Activated T-helper 1 cell treated with anti-CD3 and anti-CD28 coated beads, Interleukin-12 subunit alpha, Interleukin-12 subunit beta, Interleukin-2, Interleukin-4 antibody, amounts not matched to agents 30 ng/mL and 10 ng/mL and 1 ng/mL, durations not matched to agents 14 hours and 24 hours and 36 hours (primary cell): ENCODE measurements at regions of chr16 and their contacts with region 1.

Region 1: GRCh38 chr16:87316923-87317749 is at the start of gene C16orf95:
- DNase-seq: peak; percentile 95
- H3K4me3 Mint-ChIP-seq: peak within 1 kb of the TSS; percentile 94
- H3K27ac Mint-ChIP-seq: peak within 1 kb of the TSS; percentile 99
- H3K4me1 Mint-ChIP-seq: peaks cover 17% of the 10 kb centered on the region
- H3K27me3 Mint-ChIP-seq: no peaks in the 10 kb centered on the region
- total RNA-seq, gene C16orf95: 9.9 and 10.9 TPM in 2 replicates

Region 2: GRCh38 chr16:86554917-86555703 is 762.0 kb before region 1 on chr16 and contains the start of gene MTHFSD:
- intact Hi-C with region 1: loop called (anchors 5 kb)
- DNase-seq: peak; percentile 94
- H3K4me3 Mint-ChIP-seq: peak within 1 kb of the TSS; percentile 86
- H3K27ac Mint-ChIP-seq: peak within 1 kb of the TSS; percentile 95
- H3K4me1 Mint-ChIP-seq: peaks cover 20% of the 10 kb centered on the region
- H3K27me3 Mint-ChIP-seq: peaks cover 5% of the 10 kb centered on the region
- total RNA-seq, gene MTHFSD: 30.6 and 31.8 TPM in 2 replicates

Region 3: DNA sequence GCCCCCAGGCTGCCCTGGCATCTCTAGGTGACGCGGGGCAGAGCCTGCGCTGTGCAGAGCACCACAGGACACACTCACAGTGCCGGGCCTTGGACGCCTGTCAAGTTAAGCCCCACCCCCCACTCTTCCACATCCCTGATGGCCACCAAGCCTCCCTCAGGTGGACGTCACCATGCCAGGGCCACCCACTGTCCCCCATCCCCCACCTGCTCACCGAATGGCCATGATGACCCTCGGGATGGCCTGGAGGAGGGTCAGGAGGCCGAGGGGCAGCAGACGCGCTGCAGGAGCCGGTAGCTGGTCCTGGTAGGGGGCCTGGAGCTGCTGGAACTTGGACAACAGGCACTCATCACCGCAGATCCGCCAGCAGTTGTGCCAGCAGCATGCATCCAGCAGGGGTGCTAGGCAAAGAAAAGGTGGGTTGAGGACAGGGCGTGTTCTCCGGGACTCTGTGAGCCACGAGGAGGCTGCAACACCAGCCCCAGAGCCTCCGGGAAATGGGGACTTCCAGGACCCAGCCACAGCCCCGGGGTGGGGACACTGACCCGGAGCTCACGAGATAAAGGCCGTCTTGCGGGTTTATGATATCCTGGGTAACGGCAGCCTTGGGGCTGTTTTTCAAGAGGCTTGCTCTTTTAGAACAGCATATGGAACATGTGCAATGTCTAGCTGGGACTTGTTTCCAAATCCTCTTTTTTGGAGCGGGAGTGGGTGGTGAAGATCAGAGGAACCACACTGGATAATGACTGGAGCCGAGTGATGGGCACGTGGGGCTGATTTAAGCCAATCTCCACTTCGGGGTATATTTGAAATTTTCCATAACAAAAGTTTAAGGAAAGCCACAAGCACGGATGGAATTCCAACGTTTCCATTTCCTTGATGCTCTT is 11.4 kb before region 1 on chr16:
- intact Hi-C with region 1: loop called (anchors 1 kb)
- DNase-seq: no peak
- H3K4me3 Mint-ChIP-seq: no peak overlapping the region
- H3K27ac Mint-ChIP-seq: no peak overlapping the region
- H3K4me1 Mint-ChIP-seq: peaks cover 34% of the 10 kb centered on the region
- H3K27me3 Mint-ChIP-seq: no peaks in the 10 kb centered on the region

Region 4: DNA sequence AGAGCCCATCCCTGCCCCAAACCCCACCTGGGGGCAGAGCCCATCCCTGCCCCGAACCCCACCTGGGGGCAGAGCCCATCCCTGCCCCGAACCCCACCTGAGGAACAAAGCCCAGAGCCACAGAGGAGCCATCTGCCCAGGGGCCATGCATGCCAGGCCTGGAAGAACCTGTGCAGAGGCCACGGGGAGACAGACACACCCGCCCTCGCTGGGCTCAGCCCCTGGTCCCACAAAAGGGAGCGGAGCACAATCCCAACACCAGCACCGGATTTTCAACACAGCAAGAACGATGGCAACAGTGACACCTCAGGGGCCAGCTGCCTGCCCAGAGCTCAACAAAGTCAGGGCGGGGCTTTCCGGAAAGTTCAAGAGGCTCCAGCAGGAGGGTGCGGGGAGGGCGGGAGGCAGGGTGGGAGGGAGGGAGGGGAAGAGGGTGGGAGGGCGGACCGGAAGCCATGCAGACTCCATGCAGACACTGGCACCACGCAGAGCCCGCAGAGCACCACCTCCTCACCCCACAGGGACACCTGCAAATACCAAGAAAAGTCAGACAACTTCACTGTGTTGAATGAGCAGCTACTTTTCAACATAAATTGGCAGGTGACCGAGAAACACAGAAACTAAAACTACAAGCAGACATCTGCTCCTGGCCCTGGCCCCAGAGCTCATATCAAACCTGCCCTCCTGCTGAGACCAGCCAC is 27.9 kb after region 1 on chr16:
- intact Hi-C with region 1: no loop called
- DNase-seq: peak; percentile 35
- H3K4me3 Mint-ChIP-seq: peak overlapping the region; percentile 67
- H3K27ac Mint-ChIP-seq: peak overlapping the region; percentile 92
- H3K4me1 Mint-ChIP-seq: peaks cover 11% of the 10 kb centered on the region
- H3K27me3 Mint-ChIP-seq: no peaks in the 10 kb centered on the region

Region 5: GRCh38 chr16:87375426-87376135 is 58.4 kb after region 1 on chr16:
- intact Hi-C with region 1: no loop called
- DNase-seq: no peak
- H3K4me3 Mint-ChIP-seq: no peak overlapping the region
- H3K27ac Mint-ChIP-seq: peak overlapping the region; percentile 29
- H3K4me1 Mint-ChIP-seq: peaks cover 14% of the 10 kb centered on the region
- H3K27me3 Mint-ChIP-seq: no peaks in the 10 kb centered on the region

Region 6: GRCh38 chr16:87387942-87388817 is 71.0 kb after region 1 on chr16:
- intact Hi-C with region 1: loop called (anchors 1 kb)
- DNase-seq: peak; percentile 88
- H3K4me3 Mint-ChIP-seq: peak overlapping the region; percentile 61
- H3K27ac Mint-ChIP-seq: peak overlapping the region; percentile 89
- H3K4me1 Mint-ChIP-seq: peaks cover 34% of the 10 kb centered on the region
- H3K27me3 Mint-ChIP-seq: peaks cover 2% of the 10 kb centered on the region

Region 7: DNA sequence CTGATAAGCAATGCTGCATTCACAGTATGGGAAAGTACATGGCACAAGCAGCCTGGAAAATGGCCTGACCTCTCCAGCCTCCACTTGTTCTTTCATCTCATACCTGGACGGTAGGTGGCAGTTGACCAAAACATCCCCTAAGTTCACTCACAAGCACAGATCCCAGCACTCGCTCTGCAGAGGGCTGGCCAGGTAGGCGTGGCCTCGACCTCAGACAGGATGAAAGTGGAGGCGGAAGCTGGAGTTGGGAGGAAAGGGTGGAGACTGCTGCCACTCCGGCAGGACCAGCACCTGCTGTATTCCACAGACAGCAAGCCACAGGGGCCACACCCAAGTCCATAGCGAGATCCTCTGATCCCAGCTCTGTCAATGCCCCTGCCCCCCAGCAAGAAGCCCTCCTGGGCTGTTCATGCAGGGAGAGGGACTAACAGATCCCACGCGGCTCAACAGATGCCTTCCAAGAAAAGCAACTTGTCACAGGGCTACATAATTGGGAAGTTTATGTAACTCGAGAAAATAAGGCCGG is 144.4 kb after region 1 on chr16:
- intact Hi-C with region 1: loop called (anchors 10 kb)
- DNase-seq: no peak
- H3K4me3 Mint-ChIP-seq: no peak overlapping the region
- H3K27ac Mint-ChIP-seq: no peak overlapping the region
- H3K4me1 Mint-ChIP-seq: peaks cover 38% of the 10 kb centered on the region
- H3K27me3 Mint-ChIP-seq: no peaks in the 10 kb centered on the region

Region 8: DNA sequence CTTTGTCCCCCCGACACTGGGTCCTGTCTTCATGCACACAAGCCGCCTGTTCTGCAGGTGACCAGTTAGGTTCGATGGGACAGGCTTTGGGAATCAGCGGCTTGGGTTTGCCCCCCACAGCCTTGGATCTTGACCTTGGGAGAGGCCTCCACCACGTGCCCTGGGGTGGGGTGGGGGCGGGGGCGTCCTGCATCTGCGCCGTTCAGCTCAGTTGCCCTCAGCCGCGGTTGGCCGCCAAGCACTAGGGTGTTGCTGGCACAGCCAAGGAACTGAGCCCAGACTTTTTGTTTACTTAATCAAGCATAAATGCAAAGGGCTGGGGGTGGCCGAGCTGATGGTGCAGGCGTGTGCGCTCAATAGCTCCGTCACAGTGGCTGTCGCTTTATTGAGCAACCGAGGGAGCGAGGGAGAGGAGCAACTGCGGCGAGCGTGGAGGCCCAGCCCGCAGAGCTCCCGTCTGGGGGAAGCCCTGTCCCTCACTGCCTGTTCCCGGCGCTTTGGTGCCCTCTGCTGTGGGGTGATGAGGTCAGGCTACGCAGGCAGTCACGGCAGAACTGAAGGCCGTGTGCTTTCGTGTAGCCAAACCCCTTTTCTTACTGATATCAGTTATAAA is 319.0 kb after region 1 on chr16:
- intact Hi-C with region 1: loop called (anchors 5 kb)
- DNase-seq: peak; percentile 52
- H3K4me3 Mint-ChIP-seq: peak overlapping the region; percentile 45
- H3K27ac Mint-ChIP-seq: no peak overlapping the region
- H3K4me1 Mint-ChIP-seq: no peaks in the 10 kb centered on the region
- H3K27me3 Mint-ChIP-seq: peaks cover 11% of the 10 kb centered on the region

Region 9: DNA sequence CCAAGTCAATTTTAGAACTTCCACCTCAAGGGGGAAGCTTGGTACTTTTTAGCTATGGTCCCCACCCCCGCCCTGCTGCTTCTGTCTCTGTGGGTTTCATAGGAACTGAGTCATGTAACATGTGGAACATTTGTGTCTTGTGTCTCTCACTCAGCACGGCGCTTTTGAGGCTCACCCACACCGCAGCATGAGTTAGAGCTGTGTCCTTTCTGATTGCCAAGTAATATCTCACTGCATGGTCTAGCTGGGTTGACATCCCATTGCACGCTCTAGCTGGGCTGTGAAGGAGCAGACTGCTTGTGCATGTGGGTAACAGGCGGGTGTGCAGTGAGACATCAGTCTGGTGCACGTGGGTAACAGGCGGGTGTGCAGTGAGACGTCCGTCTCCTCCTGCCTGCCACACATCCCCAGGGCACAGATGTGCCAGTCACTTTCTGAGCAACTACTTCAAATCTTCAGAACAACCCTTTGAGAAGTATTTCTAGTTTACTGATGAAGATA is 578.6 kb after region 1 on chr16:
- intact Hi-C with region 1: loop called (anchors 10 kb)
- DNase-seq: peak; percentile 83
- H3K4me3 Mint-ChIP-seq: peak overlapping the region; percentile 76
- H3K27ac Mint-ChIP-seq: peak overlapping the region; percentile 100
- H3K4me1 Mint-ChIP-seq: peaks cover 56% of the 10 kb centered on the region
- H3K27me3 Mint-ChIP-seq: no peaks in the 10 kb centered on the region